ENCODE measurements at regions of chr7 and their contacts with region 1.

Region 1: GRCh38 chr7:87797798-87798403 is 78.3 kb downstream of the SLC25A40 start:
- DNase-seq: peak; percentile 57 to 68 (median 63)
- H3K4me3 ChIP-seq: no peak overlapping the region
- H3K27ac ChIP-seq: no peak overlapping the region
- H3K4me1 ChIP-seq: no peaks in the 10 kb centered on the region
- H3K27me3 ChIP-seq: no peaks in the 10 kb centered on the region

Region 2: GRCh38 chr7:87886875-87887274 is 89.0 kb after region 1 on chr7:
- CTCF ChIA-PET with region 1: interaction called, 36 read pairs
- POLR2A ChIA-PET with region 1: no interaction called
- DNase-seq: peak; percentile 46 to 71 (median 68)
- H3K4me3 ChIP-seq: no peak overlapping the region
- H3K27ac ChIP-seq: no peak overlapping the region
- H3K4me1 ChIP-seq: no peaks in the 10 kb centered on the region
- H3K27me3 ChIP-seq: no peaks in the 10 kb centered on the region

Region 3: GRCh38 chr7:88111136-88111743 is 313.3 kb after region 1 on chr7:
- CTCF ChIA-PET with region 1: interaction called, 10 read pairs
- POLR2A ChIA-PET with region 1: no interaction called
- DNase-seq: peak; percentile 49 to 75 (median 74)
- H3K4me3 ChIP-seq: no peak overlapping the region
- H3K27ac ChIP-seq: no peak overlapping the region
- H3K4me1 ChIP-seq: no peaks in the 10 kb centered on the region
- H3K27me3 ChIP-seq: no peaks in the 10 kb centered on the region

Measured in common myeloid progenitor, CD34-positive (primary cell).